H1 (cell line): ENCODE measurements at regions of chr10 and their contacts with region 1.

Region 1: DNA sequence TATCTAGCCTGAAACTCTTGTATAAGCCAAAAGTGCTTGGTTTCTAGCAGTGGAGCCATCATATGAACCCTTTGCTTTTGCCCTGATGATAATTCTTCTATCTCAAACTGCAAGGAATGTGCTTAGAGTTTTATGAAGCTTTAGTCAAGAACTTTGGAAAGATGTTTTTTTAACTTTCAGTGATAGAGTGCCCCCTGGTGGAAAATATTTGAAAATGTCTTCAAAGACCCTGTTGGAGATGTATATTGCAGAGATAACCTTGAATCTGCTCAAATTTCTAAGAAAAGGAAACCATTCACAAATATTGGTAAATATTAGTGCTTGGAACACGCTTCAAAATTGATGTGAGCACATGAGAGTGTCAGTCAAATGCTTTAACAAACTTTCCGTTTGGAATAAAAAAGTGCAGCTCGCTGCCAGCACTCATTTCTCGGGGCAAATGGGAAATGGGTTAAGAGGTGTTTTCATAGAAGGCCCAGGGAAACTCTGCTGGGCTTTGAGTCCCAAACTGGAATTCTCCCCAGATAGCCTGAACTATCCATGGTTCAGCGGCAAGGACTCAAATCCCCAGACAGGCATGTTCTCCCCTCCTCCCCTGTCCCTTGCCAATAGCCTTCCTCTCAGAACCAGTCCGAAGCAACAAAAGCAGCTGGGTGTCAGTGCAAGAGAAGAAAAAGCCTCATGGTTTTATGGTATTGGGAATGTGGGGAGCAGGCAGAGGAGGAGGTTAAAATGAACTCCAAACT is 129.3 kb downstream of the MYOF start:
- DNase-seq: no peak
- H3K4me3 ChIP-seq: no peak overlapping the region
- H3K27ac ChIP-seq: no peak overlapping the region
- H3K4me1 ChIP-seq: peaks cover 0 to 5% (median 2%) of the 10 kb centered on the region in 4 experiments; a peak in 3 of 7 replicates
- H3K27me3 ChIP-seq: peaks cover 0 to 3% (median 0%) of the 10 kb centered on the region in 4 experiments; a peak in 1 of 7 replicates
- CTCF ChIP-seq: peak in 2 of 3 experiments; percentile 40 to 44; a peak in 2 of 4 replicates
- EP300 ChIP-seq: no peak
- POLR2A ChIP-seq: no peak
- RAD21 ChIP-seq: peak; percentile 66 to 68

Region 2: DNA sequence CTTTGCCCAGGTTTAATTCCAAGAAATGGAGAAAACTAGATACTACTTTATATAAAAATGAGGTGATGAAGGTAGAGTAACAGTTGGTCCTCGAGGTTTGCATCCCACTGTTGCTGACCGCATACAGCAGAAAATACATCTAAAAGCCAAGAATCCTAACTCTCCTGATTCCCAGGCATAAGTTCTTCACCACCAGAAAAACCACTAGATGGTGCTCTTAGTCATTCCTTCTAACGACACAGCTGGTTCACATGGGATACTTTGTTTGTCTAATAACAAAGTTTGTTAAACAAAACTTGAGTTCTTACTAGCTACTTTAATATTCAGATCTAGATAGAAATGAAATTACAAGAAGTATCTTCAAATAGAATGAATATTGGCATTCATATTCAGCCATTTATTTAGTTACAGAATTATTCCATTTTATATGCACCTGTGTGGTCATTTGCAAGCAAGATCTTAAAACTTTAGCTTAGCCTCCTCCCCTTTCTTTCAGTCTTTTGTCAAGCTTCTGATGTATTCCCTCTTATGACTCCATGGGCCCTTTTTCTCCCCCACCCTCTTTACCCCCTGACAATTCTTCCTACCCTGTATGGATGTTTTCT is 346.3 kb before region 1 on chr10:
- CTCF ChIA-PET with region 1: interaction called, 25 read pairs
- POLR2A ChIA-PET with region 1: no interaction called
- DNase-seq: no peak
- H3K4me3 ChIP-seq: no peak overlapping the region
- H3K27ac ChIP-seq: no peak overlapping the region
- H3K4me1 ChIP-seq: no peaks in the 10 kb centered on the region
- H3K27me3 ChIP-seq: no peaks in the 10 kb centered on the region
- CTCF ChIP-seq: peak in 2 of 3 experiments; percentile 70 to 74; a peak in 3 of 4 replicates
- EP300 ChIP-seq: no peak
- POLR2A ChIP-seq: no peak
- RAD21 ChIP-seq: peak; percentile 79 to 82

Region 3: DNA sequence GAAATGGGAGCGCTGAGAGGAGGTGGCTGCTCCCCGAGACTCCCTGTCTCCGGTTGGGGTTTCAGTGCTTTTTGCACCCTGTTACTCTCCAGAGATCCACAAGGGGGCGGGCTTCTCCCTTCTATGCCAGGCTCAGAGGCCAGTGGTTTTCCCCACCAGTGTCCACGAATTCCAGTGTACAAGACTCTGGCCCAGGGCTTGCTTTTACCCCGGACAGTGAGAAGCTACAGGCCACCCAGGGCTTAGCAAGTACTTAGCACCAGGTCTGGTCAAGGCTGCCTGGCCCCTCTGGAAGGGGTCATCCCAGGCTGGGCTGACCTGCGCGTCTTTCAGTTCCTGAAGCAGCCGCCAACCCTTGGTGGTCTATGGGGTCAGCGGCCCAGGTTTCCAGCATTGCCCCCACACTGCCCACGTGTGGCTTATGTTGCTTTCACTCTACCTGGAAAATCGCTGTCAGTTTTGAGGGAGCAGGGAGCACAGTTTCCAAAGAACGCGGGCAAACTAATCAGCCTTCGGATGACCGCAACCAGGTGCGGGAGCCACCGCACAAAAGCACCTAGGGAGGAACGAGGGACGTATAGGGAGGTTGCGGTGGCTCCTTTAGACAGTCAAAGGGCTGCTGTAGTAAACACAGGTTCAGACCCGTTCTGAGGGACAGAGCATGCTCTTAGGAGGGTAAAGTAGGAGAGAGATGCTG is 272.3 kb before region 1 on chr10:
- CTCF ChIA-PET with region 1: interaction called, 363 read pairs
- POLR2A ChIA-PET with region 1: no interaction called
- DNase-seq: peak in 1 of 2 experiments; percentile 85
- H3K4me3 ChIP-seq: no peak overlapping the region
- H3K27ac ChIP-seq: no peak overlapping the region
- H3K4me1 ChIP-seq: peaks cover 3 to 9% (median 5%) of the 10 kb centered on the region in 4 experiments; a peak in 6 of 7 replicates
- H3K27me3 ChIP-seq: peaks cover 11 to 17% (median 15%) of the 10 kb centered on the region in 4 experiments; a peak in 6 of 7 replicates
- CTCF ChIP-seq: peak; percentile 67 to 88 (median 80)
- EP300 ChIP-seq: no peak
- POLR2A ChIP-seq: no peak
- RAD21 ChIP-seq: peak; percentile 91

Region 4: DNA sequence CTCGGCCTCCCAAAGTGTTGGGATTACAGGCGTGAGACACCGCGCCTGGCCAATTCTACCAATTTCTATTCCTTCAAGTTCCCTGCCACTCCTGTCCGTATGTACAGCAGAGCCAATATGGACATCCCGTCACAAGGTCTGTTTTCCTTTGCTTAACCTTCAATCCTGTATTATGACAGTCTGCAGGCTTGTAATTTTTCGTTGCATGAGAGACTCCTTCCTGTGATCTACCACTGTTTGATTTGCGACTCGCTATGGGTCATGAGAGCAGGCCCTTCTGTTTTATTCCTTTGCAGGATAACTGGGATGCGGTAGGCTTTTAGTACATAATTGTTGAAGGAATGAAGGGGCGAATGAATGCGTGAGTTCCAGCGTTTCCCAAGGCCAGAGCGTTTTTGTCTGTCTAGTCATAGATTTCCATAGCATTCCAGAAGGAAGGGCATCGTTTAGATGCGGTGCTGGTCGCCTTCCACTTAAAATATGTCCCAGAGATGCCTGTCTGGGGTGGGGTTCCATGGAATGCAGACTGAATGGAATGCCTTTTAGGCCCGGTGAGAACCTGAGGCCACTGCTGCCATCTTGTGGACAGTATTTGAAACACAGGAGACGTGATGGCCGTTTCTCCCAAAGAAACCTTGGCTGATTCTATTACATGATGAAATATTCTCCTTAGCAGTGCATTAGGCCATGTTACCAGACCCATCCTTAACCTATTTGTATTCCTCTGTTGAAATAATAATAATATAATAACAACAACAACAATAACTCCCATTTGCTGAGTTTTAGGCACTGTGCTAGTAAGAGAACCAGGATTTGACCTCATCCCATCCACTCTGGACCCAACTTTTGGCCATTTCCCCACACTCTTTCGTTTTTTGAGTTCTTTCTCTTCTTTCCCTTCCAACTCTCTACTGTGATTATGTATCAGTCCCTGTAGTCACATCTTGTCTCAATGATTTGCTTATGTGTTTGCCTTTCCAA is 63.9 kb before region 1 on chr10:
- CTCF ChIA-PET with region 1: interaction called, 13 read pairs
- POLR2A ChIA-PET with region 1: no interaction called
- DNase-seq: peak; percentile 85
- H3K4me3 ChIP-seq: no peak overlapping the region; a peak in 1 of 8 replicates
- H3K27ac ChIP-seq: peak overlapping the region; percentile 52; the same call in 1 of the 2 replicates
- H3K4me1 ChIP-seq: peaks cover 0 to 11% (median 3%) of the 10 kb centered on the region in 4 experiments; a peak in 5 of 7 replicates
- H3K27me3 ChIP-seq: no peaks in the 10 kb centered on the region; a peak in 1 of 7 replicates
- CTCF ChIP-seq: peak; percentile 60 to 87 (median 86)
- EP300 ChIP-seq: peak in 1 of 2 experiments; percentile 45; a peak in 1 of 3 replicates
- POLR2A ChIP-seq: no peak
- RAD21 ChIP-seq: peak; percentile 97 to 98

Region 5: GRCh38 chr10:93363891-93364648 is 11.3 kb after region 1 on chr10:
- CTCF ChIA-PET with region 1: interaction called, 16 read pairs
- POLR2A ChIA-PET with region 1: no interaction called
- DNase-seq: no peak
- H3K4me3 ChIP-seq: no peak overlapping the region
- H3K27ac ChIP-seq: no peak overlapping the region
- H3K4me1 ChIP-seq: peaks cover 0 to 6% (median 0%) of the 10 kb centered on the region in 4 experiments; a peak in 1 of 7 replicates
- H3K27me3 ChIP-seq: no peaks in the 10 kb centered on the region
- CTCF ChIP-seq: no peak
- EP300 ChIP-seq: no peak
- POLR2A ChIP-seq: no peak
- RAD21 ChIP-seq: no peak

Region 6: GRCh38 chr10:93503075-93503474 is 150.3 kb after region 1 on chr10:
- CTCF ChIA-PET with region 1: interaction called, 33 read pairs
- POLR2A ChIA-PET with region 1: no interaction called
- DNase-seq: no peak
- H3K4me3 ChIP-seq: no peak overlapping the region
- H3K27ac ChIP-seq: no peak overlapping the region
- H3K4me1 ChIP-seq: no peaks in the 10 kb centered on the region
- H3K27me3 ChIP-seq: no peaks in the 10 kb centered on the region
- CTCF ChIP-seq: no peak
- EP300 ChIP-seq: no peak
- POLR2A ChIP-seq: no peak
- RAD21 ChIP-seq: no peak